Activated T-helper 1 cell treated with anti-CD3 and anti-CD28 coated beads, Interleukin-12 subunit alpha, Interleukin-12 subunit beta, Interleukin-2, Interleukin-4 antibody, amounts not matched to agents 30 ng/mL and 10 ng/mL and 1 ng/mL, durations not matched to agents 14 hours and 24 hours and 36 hours (primary cell): ENCODE measurements at regions of chr11 and their contacts with region 1.

Region 1: GRCh38 chr11:119284344-119285157 is 32.4 kb downstream of the MCAM start:
- DNase-seq: no peak
- H3K4me3 Mint-ChIP-seq: no peak overlapping the region
- H3K27ac Mint-ChIP-seq: no peak overlapping the region
- H3K4me1 Mint-ChIP-seq: peaks cover 27% of the 10 kb centered on the region
- H3K27me3 Mint-ChIP-seq: no peaks in the 10 kb centered on the region

Region 2: GRCh38 chr11:119144825-119145486 is 139.6 kb before region 1 on chr11:
- intact Hi-C with region 1: no loop called
- DNase-seq: no peak
- H3K4me3 Mint-ChIP-seq: no peak overlapping the region
- H3K27ac Mint-ChIP-seq: no peak overlapping the region
- H3K4me1 Mint-ChIP-seq: peaks cover 13% of the 10 kb centered on the region
- H3K27me3 Mint-ChIP-seq: peaks cover 38% of the 10 kb centered on the region

Region 3: GRCh38 chr11:119168471-119169281 is 115.9 kb before region 1 on chr11 and contains the start of gene NLRX1:
- intact Hi-C with region 1: loop called (anchors 1 kb)
- DNase-seq: peak; percentile 77
- H3K4me3 Mint-ChIP-seq: peak within 1 kb of the TSS; percentile 92
- H3K27ac Mint-ChIP-seq: peak within 1 kb of the TSS; percentile 94
- H3K4me1 Mint-ChIP-seq: peaks cover 24% of the 10 kb centered on the region
- H3K27me3 Mint-ChIP-seq: peaks cover 2% of the 10 kb centered on the region
- total RNA-seq, gene NLRX1: 24.1 and 29.5 TPM in 2 replicates

Region 4: GRCh38 chr11:119185981-119186634 is 98.4 kb before region 1 on chr11:
- intact Hi-C with region 1: no loop called
- DNase-seq: no peak
- H3K4me3 Mint-ChIP-seq: no peak overlapping the region
- H3K27ac Mint-ChIP-seq: no peak overlapping the region
- H3K4me1 Mint-ChIP-seq: no peaks in the 10 kb centered on the region
- H3K27me3 Mint-ChIP-seq: peaks cover 9% of the 10 kb centered on the region

Region 5: DNA sequence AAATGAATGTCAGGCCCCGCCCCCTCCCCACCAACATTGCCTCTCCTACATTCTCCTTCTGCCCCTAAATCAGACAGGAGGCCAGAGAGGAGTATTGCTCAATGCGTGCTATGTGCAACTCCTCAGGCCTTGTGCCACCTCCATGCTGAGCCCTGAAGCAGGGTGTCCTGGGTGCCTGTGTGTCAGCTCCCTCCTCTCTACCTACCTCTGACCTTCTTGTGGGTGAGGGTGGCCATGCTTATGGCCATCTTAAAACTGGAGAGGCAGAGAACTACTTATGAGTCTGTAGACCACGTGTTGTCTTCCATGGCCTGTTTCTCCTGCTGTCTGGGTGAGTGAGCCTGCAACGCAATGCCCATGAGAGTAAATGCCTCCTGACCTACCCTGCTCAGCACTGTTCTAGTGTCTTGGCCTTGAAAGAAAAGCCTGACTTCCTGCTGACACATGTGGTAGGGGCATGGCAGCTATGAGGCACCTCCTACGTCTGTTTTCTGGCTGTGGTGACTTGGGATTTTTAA is 21.9 kb after region 1 on chr11:
- intact Hi-C with region 1: loop called (anchors 2 kb)
- DNase-seq: peak; percentile 15
- H3K4me3 Mint-ChIP-seq: peak overlapping the region; percentile 48
- H3K27ac Mint-ChIP-seq: peak overlapping the region; percentile 95
- H3K4me1 Mint-ChIP-seq: peaks cover 30% of the 10 kb centered on the region
- H3K27me3 Mint-ChIP-seq: no peaks in the 10 kb centered on the region

Region 6: GRCh38 chr11:119550053-119550752 is 265.7 kb after region 1 on chr11:
- intact Hi-C with region 1: no loop called
- DNase-seq: no peak
- H3K4me3 Mint-ChIP-seq: no peak overlapping the region
- H3K27ac Mint-ChIP-seq: no peak overlapping the region
- H3K4me1 Mint-ChIP-seq: no peaks in the 10 kb centered on the region
- H3K27me3 Mint-ChIP-seq: peaks cover 2% of the 10 kb centered on the region